ENCODE measurements at regions of chr2 and their contacts with region 1.

Region 1: GRCh38 chr2:102005989-102006885 is 14.5 kb downstream of the IL1R2 start:
- DNase-seq: peak in 1 of 3 donors; percentile 51
- ATAC-seq: peak; percentile 78 to 87
- H3K4me3 ChIP-seq: no peak overlapping the region
- H3K27ac ChIP-seq: no peak overlapping the region
- H3K4me1 ChIP-seq: no peaks in the 10 kb centered on the region
- H3K27me3 ChIP-seq: no peaks in the 10 kb centered on the region

Region 2: GRCh38 chr2:102235491-102235890 is 229.3 kb after region 1 on chr2:
- intact Hi-C with region 1: loop called in 2 of 4 experiments (anchors 5 kb)
- DNase-seq: no peak
- ATAC-seq: peak in 1 of 2 donors; percentile 28
- H3K4me3 ChIP-seq: no peak overlapping the region
- H3K27ac ChIP-seq: no peak overlapping the region
- H3K4me1 ChIP-seq: no peaks in the 10 kb centered on the region
- H3K27me3 ChIP-seq: no peaks in the 10 kb centered on the region

Region 3: DNA sequence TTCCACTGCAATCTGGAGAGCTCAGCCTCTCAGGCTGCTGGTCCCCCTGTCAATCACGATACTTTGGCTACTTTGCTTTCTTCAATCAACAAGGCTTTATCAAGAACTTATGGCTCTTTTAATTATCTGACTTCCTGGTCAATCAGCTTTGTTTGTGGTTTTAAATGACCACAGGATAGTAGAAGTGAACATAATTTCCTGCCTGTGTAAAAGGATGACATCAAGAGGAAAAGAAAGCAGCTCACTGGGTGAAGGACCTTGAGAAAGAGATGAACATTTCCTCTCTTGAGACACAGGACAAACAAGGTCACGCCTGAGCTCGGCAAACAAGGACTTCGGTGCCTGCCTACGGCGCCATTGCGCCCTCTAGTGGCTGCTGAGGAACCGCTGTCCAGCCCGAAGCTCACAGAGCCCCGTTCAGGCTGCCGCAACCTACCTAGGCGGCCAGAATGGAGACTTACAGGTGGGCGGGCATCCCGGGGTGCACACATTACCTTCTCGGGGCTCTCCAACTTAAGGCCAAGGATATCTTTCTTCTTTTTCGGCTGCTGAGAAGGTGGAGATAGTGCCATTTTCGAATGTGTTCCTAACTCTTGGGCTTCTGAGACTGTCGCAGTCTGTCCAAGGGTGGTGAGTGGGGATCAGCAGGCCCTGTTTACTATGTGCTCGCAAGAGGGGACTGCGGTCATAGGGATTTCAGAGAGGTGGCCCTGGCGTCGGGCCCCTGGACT is 234.6 kb after region 1 on chr2:
- intact Hi-C with region 1: loop called in 2 of 4 experiments (anchors 5 kb)
- DNase-seq: peak; percentile 94 to 96 (median 96)
- ATAC-seq: peak; percentile 94
- H3K4me3 ChIP-seq: no peak overlapping the region
- H3K27ac ChIP-seq: peak overlapping the region; percentile 63
- H3K4me1 ChIP-seq: no peaks in the 10 kb centered on the region
- H3K27me3 ChIP-seq: no peaks in the 10 kb centered on the region

Region 4: DNA sequence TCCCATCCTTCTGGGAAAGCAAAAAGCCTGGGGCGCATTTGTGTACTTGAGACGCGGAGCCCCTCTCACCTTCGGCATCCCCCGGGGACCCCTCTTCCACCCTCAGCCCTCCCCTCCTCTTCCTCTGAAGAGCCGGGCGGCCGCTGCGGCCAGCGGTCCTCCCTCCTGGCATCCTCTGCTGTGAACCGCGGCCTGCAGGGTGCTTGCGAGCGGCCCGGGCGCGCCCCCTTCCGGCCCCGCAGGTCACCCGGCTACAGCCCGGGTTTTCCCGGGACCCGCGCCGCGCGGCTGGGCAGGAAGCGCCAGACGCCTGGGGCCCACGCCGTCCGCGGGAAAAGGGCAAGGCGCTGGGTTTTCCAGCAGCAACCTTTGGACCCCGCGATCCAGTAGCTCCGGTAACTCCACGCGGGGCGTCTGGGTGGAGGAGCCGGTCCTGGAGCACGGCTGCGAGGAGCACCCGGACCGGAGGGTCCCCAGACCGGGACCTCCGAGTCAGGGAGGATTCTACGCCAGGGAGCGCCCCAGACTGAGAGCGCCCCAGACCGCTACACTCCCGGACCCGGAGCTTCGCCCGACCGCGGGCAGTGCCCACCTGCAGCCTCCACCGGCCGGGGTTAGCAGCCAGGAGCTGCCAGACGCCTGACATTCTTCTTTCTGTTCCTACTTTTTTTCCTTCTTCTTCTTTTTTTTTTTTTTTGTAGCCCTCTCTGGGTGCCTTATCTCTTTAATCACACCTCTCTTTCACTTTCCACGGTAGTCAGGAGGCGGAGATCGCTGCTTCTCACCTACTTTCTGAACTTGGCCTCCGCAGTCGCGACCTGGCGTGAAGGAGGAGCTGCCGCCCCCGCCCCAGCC is 349.5 kb after region 1 on chr2 and contains the start of gene IL18R1:
- intact Hi-C with region 1: loop called in 1 of 4 experiments (anchors 10 kb)
- DNase-seq: peak; percentile 87 to 94 (median 93)
- ATAC-seq: peak; percentile 99
- H3K4me3 ChIP-seq: peak within 1 kb of the TSS; percentile 74
- H3K27ac ChIP-seq: peak within 1 kb of the TSS; percentile 42
- H3K4me1 ChIP-seq: no peaks in the 10 kb centered on the region
- H3K27me3 ChIP-seq: no peaks in the 10 kb centered on the region
- total RNA-seq, gene IL18R1: 2.7 to 8.1 (median 4.0) TPM

Region 5: DNA sequence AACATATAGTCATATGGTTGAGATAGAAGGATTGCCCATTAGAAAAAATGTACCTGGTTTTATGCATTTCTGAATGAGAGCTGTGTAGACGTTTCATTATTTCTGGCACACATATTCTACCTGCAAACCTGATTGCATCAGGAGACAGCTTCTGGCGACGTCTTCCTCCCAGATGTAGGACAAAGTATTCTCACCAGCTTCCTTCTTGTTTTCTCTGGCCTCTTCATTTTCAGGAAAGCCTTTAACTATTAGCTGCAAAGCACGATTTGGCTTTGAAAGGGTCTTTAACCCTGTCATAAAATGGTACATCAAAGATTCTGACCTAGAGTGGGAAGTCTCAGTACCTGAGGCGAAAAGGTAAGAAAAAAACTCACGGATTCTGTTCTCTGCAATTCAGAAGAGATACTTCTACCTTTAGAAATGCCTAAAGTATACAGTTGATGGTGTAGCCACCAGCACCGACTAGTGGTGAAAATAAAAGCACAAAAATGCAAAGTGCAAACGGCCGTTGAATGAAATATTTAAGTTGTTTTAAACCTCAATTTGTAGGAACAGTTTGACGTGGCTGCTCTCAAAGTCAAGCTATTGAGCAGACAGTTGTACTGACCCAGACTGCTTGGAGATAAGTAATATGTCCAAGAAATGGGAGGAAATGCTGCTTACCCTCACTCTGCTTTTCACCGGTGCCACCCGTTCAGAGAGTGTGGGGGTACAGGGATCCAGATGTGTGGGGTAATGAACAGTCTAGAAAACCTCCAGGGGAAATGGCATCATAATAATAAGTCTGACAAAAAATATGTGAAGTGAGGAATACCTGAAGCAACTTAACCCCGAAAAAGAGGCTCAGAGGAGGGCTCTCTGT is 437.0 kb after region 1 on chr2:
- intact Hi-C with region 1: loop called in 1 of 4 experiments (anchors 10 kb)
- DNase-seq: no peak
- ATAC-seq: peak in 1 of 2 donors; percentile 58
- H3K4me3 ChIP-seq: no peak overlapping the region
- H3K27ac ChIP-seq: no peak overlapping the region
- H3K4me1 ChIP-seq: no peaks in the 10 kb centered on the region
- H3K27me3 ChIP-seq: no peaks in the 10 kb centered on the region